RWPE1 (cell line): ENCODE measurements at regions of chr19 and their contacts with region 1.

Region 1: GRCh38 chr19:8355631-8356402 is 8.1 kb upstream of the ANGPTL4 start:
- DNase-seq: peak; percentile 69
- H3K27ac ChIP-seq: peak overlapping the region; percentile 77
- CTCF ChIP-seq: no peak

Region 2: GRCh38 chr19:8085598-8086408 is 270.0 kb before region 1 on chr19:
- CTCF ChIA-PET with region 1: no interaction called
- POLR2A ChIA-PET with region 1: no interaction called
- DNase-seq: peak; percentile 36
- H3K27ac ChIP-seq: no peak overlapping the region
- CTCF ChIP-seq: no peak

Region 3: DNA sequence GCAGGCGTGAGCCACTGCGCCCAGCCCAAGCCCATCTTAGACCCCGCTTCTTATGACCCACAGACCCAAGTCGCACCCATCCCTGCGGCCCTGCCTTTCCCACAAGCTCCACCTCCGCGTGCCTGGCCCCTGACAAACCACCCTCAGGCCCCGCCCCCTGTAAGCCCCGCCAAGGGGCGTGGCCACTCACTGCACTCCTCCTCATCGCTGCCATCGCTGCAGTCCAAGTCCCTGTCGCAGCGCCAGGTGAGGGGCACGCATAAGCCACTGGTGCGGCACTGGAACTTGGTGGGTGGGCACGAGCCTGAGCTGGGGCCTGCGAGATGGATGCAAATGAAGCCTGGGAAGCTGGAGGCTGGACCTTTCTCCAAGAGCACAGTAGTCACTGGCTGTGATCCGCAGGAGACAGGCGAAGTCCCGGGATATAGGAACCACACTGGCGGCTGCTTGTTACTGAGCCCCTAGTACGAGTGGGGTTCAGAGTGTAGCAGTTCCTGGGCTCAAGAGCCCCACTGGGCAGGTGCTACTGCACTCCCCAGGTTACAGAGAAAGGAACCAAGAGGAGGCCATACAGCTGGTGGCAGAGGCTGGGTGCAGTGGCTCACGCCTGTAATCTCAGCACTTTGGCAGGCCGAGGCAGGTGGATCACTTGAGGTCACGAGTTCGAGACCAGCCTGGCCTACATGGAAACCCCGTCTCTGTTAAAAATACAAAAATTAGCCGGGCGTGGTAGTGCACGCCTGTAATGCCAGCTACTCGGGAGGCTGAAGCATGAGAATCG is 50.8 kb before region 1 on chr19:
- CTCF ChIA-PET with region 1: no interaction called
- POLR2A ChIA-PET with region 1: no interaction called
- DNase-seq: no peak
- H3K27ac ChIP-seq: peak overlapping the region; percentile 75
- CTCF ChIP-seq: no peak

Region 4: DNA sequence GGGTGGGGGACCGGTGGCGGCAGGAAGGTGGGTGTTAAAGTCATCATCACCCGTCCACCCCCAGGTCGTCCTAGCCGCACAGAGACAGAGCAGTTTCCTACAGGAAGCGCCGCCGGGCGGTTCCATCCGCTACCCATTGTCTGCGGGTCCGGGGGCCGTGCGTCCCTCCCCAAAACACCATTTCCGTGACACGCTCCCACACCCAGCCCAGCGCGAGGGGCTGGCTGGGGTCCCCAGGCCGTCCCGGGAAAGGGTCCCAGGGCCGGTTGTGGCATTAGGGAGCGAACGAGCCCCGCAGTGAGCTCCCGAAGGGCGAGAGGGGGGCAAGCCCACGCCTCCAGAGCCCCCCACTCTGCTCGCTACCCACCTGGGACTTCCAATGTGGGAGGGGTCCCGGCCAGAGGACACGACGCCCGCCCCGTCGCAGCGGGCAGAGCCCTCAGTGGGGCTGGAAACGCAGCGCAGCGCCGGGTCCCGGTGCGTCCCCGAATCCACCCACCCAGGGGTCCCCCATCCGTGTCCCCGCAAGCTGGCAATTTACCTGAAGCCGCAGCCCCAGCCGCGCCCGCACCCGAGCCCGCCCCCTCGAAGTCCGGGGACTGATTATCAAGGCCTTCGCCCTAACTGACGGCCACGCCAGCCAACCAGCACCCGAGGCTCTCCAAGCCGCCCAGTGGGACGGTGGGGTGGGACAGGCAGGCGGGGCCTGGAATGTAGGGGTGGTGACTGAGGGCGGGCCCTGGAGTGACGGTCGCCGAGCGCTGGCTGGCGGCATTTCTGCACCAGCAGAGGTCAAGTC is 12.9 kb before region 1 on chr19 and contains the start of gene KANK3:
- CTCF ChIA-PET with region 1: interaction called, 10 read pairs
- POLR2A ChIA-PET with region 1: no interaction called
- DNase-seq: peak; percentile 99
- H3K27ac ChIP-seq: no peak within 1 kb of the TSS
- CTCF ChIP-seq: no peak

Region 5: GRCh38 chr19:8398311-8398771 is 42.5 kb after region 1 on chr19:
- CTCF ChIA-PET with region 1: interaction called, 10 read pairs
- POLR2A ChIA-PET with region 1: no interaction called
- DNase-seq: no peak
- H3K27ac ChIP-seq: peak overlapping the region; percentile 85
- CTCF ChIP-seq: no peak